GM12878 (cell line): ENCODE measurements at regions of chr12 and their contacts with region 1.

Region 1: GRCh38 chr12:30695199-30696103 is at the start of gene IPO8:
- DNase-seq: peak; percentile 35
- ATAC-seq: peak; percentile 85
- H3K4me3 ChIP-seq: peak within 1 kb of the TSS; percentile 83
- H3K27ac ChIP-seq: peak within 1 kb of the TSS; percentile 70
- H3K4me1 ChIP-seq: peaks cover 8% of the 10 kb centered on the region
- H3K27me3 ChIP-seq: no peaks in the 10 kb centered on the region
- CTCF ChIP-seq: peak in 2 of 3 experiments; percentile 18 to 49; a peak in 2 of 6 replicates
- EP300 ChIP-seq: no peak
- POLR2A ChIP-seq: peak; percentile 61
- RAD21 ChIP-seq: no peak
- polyA plus RNA-seq, gene IPO8: 6.9 to 10.2 TPM

Region 2: DNA sequence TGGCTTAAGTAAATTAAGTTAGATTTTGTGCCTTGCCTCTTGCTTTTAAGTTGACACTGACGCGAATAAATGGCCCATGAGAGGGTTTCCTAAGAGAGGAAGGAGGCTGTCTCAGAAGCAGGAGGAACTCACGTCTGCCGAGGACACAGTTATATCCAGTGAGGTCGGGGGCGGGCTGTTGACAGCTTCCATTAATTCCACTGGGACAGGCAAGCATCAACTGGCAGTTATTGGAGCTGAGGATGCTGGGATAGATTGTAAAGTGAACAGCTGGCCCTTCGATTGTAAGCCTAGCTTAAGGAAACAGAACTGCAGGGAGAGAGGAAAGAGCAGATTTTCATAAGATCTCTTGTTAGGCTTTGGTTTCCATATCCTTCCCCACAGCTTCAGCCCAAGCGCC is 399.0 kb before region 1 on chr12:
- CTCF ChIA-PET with region 1: no interaction called
- POLR2A ChIA-PET with region 1: no interaction called
- RAD21 ChIA-PET with region 1: no interaction called
- SMC1A ChIA-PET with region 1: no interaction called
- in situ Hi-C with region 1: no loop called
- intact Hi-C with region 1: no loop called
- DNase-seq: no peak
- ATAC-seq: no peak
- H3K4me3 ChIP-seq: no peak overlapping the region
- H3K27ac ChIP-seq: no peak overlapping the region
- H3K4me1 ChIP-seq: no peaks in the 10 kb centered on the region
- H3K27me3 ChIP-seq: no peaks in the 10 kb centered on the region
- CTCF ChIP-seq: no peak
- EP300 ChIP-seq: no peak
- POLR2A ChIP-seq: no peak
- RAD21 ChIP-seq: no peak

Region 3: DNA sequence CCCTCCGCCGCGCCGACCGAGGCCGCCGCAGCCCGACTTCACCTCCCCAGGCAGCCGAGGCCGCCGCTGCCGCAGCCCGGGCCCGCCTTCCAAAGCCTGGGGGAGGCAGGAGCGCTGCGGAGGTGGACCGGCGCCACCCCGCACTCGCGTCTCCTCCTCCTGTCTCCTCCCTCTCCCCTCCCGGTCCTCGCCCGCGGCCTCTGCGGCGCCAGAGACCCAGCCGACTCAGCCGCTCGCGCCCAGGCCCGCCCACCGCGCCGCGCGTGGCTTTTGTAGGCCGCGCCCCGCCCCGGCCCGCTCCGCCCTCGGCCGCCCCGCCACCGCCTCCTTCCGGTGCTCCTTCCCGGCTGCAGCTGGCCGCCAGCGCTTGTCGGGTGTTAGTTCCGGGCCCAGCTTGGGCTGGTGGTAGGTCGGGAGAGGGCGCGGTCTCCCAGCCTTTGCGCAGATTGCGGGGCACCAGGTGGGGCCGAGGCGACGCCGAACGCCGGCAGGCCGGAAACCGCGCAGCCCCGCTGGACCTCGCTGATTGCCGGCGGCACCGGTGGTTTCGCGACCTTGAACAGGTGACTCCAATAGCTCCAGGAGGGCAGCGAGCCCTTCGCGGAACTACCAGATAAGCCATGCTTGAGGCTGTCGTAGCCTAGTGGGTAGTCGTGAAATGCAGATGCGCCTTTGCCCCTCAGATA is 59.4 kb after region 1 on chr12 and contains the start of gene CAPRIN2:
- CTCF ChIA-PET with region 1: interaction called, 6 read pairs
- POLR2A ChIA-PET with region 1: interaction called, 5 read pairs
- RAD21 ChIA-PET with region 1: interaction called, 9 read pairs
- SMC1A ChIA-PET with region 1: interaction called, 7 read pairs
- in situ Hi-C with region 1: no loop called
- intact Hi-C with region 1: loop called (anchors 2 kb)
- DNase-seq: peak; percentile 52
- ATAC-seq: peak; percentile 95
- H3K4me3 ChIP-seq: peak within 1 kb of the TSS; percentile 90
- H3K27ac ChIP-seq: peak within 1 kb of the TSS; percentile 50; the same call in 1 of the 2 replicates
- H3K4me1 ChIP-seq: peaks cover 6% of the 10 kb centered on the region; the same call in 1 of the 2 replicates
- H3K27me3 ChIP-seq: no peaks in the 10 kb centered on the region
- CTCF ChIP-seq: peak in 2 of 3 experiments; percentile 11 to 46; a peak in 3 of 6 replicates
- EP300 ChIP-seq: no peak
- POLR2A ChIP-seq: peak; percentile 90
- RAD21 ChIP-seq: peak; percentile 38; the same call in 1 of the 2 replicates
- polyA plus RNA-seq, gene CAPRIN2: 1.2 to 3.0 TPM

Region 4: GRCh38 chr12:30896461-30896860 is 201.0 kb after region 1 on chr12:
- CTCF ChIA-PET with region 1: no interaction called
- POLR2A ChIA-PET with region 1: no interaction called
- RAD21 ChIA-PET with region 1: no interaction called
- SMC1A ChIA-PET with region 1: no interaction called
- in situ Hi-C with region 1: no loop called
- intact Hi-C with region 1: no loop called
- DNase-seq: no peak
- ATAC-seq: no peak
- H3K4me3 ChIP-seq: no peak overlapping the region
- H3K27ac ChIP-seq: no peak overlapping the region
- H3K4me1 ChIP-seq: no peaks in the 10 kb centered on the region
- H3K27me3 ChIP-seq: no peaks in the 10 kb centered on the region; a peak in 1 of 4 replicates
- CTCF ChIP-seq: no peak
- EP300 ChIP-seq: no peak
- POLR2A ChIP-seq: no peak
- RAD21 ChIP-seq: no peak